ENCODE measurements at regions of chr14 and their contacts with region 1.

Region 1: DNA sequence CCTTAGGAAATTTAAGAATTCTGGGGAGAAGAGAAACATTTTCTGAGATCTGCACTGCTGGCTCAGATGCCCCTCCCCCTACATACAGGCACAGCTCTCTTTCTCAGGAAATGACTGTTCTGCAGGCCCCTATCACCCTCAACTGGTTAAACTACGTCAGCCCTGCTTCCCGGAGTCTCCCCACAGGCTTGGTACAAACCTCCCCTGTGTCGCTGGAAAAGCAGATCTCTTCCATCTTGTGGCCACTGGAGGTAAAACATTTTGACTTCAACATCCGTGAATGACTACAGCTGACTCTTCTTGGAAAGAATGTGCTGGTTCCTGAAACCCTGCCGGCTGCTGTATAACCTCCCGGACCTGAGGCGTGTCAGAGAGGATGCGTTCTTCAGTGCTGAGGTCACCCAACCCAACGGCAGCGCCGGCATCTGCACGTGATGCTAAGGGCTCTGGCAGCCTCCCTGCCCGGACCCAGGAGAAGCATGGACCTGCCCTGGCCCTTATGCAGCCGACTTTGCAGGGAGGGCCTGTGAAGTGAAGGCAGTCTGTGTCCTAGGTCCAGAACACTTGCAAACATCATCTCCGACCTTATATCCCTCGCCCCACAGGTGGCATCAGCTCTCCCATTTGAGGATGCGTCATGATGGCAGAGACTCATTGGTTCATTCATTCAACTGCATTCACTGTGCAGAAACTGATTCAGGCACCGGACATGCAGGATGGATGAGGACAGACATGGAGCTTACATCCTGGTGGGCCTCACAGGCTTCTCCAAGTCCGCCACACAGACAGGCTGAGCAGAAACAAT is 129.3 kb downstream of the GCH1 start:
- DNase-seq: peak; percentile 67 to 83
- H3K4me3 ChIP-seq: no peak overlapping the region
- H3K27ac ChIP-seq: no peak overlapping the region
- H3K4me1 ChIP-seq: peaks cover 0 to 11% (median 2%) of the 10 kb centered on the region in 4 experiments; a peak in 4 of 7 replicates
- H3K27me3 ChIP-seq: no peaks in the 10 kb centered on the region
- CTCF ChIP-seq: peak; percentile 40 to 74 (median 70)
- EP300 ChIP-seq: peak in 1 of 2 experiments; percentile 10; a peak in 1 of 3 replicates
- POLR2A ChIP-seq: no peak
- RAD21 ChIP-seq: peak; percentile 71 to 75

Region 2: GRCh38 chr14:54566410-54567223 is 206.8 kb before region 1 on chr14 and contains the start of gene SAMD4A:
- CTCF ChIA-PET with region 1: interaction called, 98 read pairs
- POLR2A ChIA-PET with region 1: interaction called, 20 read pairs
- DNase-seq: peak in 1 of 2 experiments; percentile 75
- H3K4me3 ChIP-seq: peak within 1 kb of the TSS; percentile 62 to 84 (median 77)
- H3K27ac ChIP-seq: no peak within 1 kb of the TSS
- H3K4me1 ChIP-seq: peaks cover 2 to 9% (median 6%) of the 10 kb centered on the region in 4 experiments; a peak in 6 of 7 replicates
- H3K27me3 ChIP-seq: peaks cover 0 to 30% (median 11%) of the 10 kb centered on the region in 4 experiments; a peak in 4 of 7 replicates
- CTCF ChIP-seq: no peak
- EP300 ChIP-seq: no peak
- POLR2A ChIP-seq: no peak; a peak in 1 of 3 replicates
- RAD21 ChIP-seq: peak in 1 of 2 experiments; percentile 10; a peak in 1 of 4 replicates
- total RNA-seq, gene SAMD4A: 11.5 and 12.3 TPM in 2 replicates

Region 3: DNA sequence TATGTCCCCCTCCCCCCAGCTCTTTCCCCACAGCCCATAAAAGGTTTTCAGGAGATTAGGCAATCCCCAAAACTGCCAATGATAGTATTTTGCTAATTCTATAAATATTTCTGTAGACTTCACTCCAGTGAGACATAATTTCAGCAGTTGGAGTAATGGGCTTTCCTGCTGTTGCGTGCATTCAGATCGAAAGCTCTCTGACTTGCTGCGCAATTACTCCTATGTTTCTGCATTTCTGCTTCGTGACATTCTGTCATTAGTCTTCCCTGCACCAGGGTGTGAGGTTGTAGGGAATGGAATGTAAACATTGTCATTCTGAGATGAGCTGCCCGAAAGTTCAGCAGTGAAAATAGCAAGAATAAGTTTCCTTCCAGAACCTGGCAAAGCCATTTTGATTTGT is 148.3 kb before region 1 on chr14:
- CTCF ChIA-PET with region 1: interaction called, 13 read pairs
- POLR2A ChIA-PET with region 1: no interaction called
- DNase-seq: no peak
- H3K4me3 ChIP-seq: no peak overlapping the region
- H3K27ac ChIP-seq: no peak overlapping the region
- H3K4me1 ChIP-seq: peaks cover 0 to 15% (median 7%) of the 10 kb centered on the region in 4 experiments; a peak in 5 of 7 replicates
- H3K27me3 ChIP-seq: no peaks in the 10 kb centered on the region
- CTCF ChIP-seq: no peak
- EP300 ChIP-seq: no peak
- POLR2A ChIP-seq: no peak
- RAD21 ChIP-seq: no peak

Region 4: GRCh38 chr14:54722781-54723432 is 50.5 kb before region 1 on chr14:
- CTCF ChIA-PET with region 1: interaction called, 51 read pairs
- POLR2A ChIA-PET with region 1: no interaction called
- DNase-seq: no peak
- H3K4me3 ChIP-seq: no peak overlapping the region
- H3K27ac ChIP-seq: no peak overlapping the region
- H3K4me1 ChIP-seq: peaks cover 0 to 5% (median 3%) of the 10 kb centered on the region in 4 experiments; a peak in 2 of 7 replicates
- H3K27me3 ChIP-seq: peaks cover 0 to 1% (median 0%) of the 10 kb centered on the region in 4 experiments; a peak in 1 of 7 replicates
- CTCF ChIP-seq: peak in 2 of 3 experiments; percentile 49 to 50; a peak in 3 of 4 replicates
- EP300 ChIP-seq: no peak
- POLR2A ChIP-seq: no peak
- RAD21 ChIP-seq: peak; percentile 62 to 65

Region 5: DNA sequence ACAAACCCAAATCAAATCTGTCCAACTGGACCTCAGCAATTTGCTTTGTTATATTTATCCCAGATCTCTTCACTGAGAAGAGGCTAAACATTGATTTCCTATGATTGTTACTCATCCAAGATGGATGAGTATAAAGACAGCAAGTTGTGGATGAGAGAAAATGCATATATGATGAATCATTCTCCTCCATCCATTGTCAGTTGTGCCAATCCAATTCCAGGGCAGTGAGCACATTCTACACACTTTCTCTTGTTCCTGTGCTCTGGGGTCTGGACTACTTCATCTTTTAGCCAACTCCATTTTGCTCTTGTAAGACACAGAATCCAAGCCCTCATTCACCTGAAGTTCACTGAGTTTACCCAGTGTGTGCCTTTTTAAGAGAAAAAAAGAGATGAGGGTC is 23.6 kb after region 1 on chr14:
- CTCF ChIA-PET with region 1: interaction called, 86 read pairs
- POLR2A ChIA-PET with region 1: interaction called, 3 read pairs
- DNase-seq: no peak
- H3K4me3 ChIP-seq: no peak overlapping the region
- H3K27ac ChIP-seq: no peak overlapping the region
- H3K4me1 ChIP-seq: no peaks in the 10 kb centered on the region
- H3K27me3 ChIP-seq: no peaks in the 10 kb centered on the region; a peak in 1 of 7 replicates
- CTCF ChIP-seq: no peak
- EP300 ChIP-seq: no peak
- POLR2A ChIP-seq: no peak
- RAD21 ChIP-seq: no peak